ENCODE measurements at regions of chr15 and their contacts with region 1.

Region 1: GRCh38 chr15:73873889-73874511 is 636 bp downstream of the TBC1D21 start:
- DNase-seq: peak; percentile 29 to 67 (median 37)
- H3K4me3 ChIP-seq: no peak overlapping the region
- H3K4me3 Mint-ChIP-seq: no peak overlapping the region
- H3K27ac ChIP-seq: no peak overlapping the region
- H3K27ac Mint-ChIP-seq: no peak overlapping the region
- H3K4me1 ChIP-seq: no peaks in the 10 kb centered on the region
- H3K4me1 Mint-ChIP-seq: no peaks in the 10 kb centered on the region
- H3K27me3 ChIP-seq: peaks cover 7 to 8% of the 10 kb centered on the region in 2 donors
- H3K27me3 Mint-ChIP-seq: peaks cover 3 to 32% (median 15%) of the 10 kb centered on the region in 3 donors
- CTCF ChIP-seq: peak; percentile 77

Region 2: DNA sequence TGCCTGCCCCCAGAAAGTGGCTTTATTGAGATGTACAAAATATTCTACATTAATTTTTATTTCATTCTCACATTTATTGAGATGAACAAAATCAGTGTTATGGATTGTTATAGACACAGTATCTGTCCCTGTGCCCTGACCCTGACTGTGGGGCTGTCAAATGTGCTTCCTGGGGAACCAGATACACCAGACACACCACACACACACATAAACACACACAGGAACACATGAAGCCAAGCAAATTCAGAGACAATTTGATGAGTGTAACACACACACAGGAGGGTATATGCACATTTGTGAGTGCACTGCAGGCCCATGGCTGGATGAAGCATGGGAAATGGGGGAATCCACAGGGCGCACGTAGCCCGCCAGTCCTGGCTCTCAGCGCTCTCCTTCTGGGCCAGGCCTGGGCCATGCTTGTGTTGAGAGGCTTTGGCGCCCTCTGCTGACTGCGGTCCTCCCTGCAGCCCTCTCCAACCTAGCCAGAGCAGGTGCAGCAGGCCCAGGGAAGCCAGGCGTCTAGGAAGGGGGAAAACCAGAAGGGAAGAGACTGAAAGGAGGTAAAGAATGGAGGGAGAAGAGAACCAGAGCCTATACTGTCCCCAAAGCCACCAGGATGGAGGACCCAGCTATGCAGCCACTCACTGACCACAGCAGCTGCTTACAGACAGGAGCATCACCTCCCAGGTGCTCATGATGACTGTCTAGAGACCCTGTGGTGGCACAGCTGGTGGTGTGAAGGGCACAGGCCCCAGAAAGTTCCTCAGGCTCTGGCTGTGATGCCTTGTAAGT is 34.2 kb after region 1 on chr15:
- intact Hi-C with region 1: loop called in 1 of 2 experiments (anchors 2 kb)
- DNase-seq: peak; percentile 53 to 71 (median 69)
- H3K4me3 ChIP-seq: no peak overlapping the region
- H3K4me3 Mint-ChIP-seq: no peak overlapping the region
- H3K27ac ChIP-seq: no peak overlapping the region
- H3K27ac Mint-ChIP-seq: peak overlapping the region in 1 of 7 donors; percentile 8
- H3K4me1 ChIP-seq: peaks cover 0 to 11% of the 10 kb centered on the region in 2 donors
- H3K4me1 Mint-ChIP-seq: peaks cover 22% of the 10 kb centered on the region
- H3K27me3 ChIP-seq: no peaks in the 10 kb centered on the region
- H3K27me3 Mint-ChIP-seq: peaks cover 4 to 11% (median 5%) of the 10 kb centered on the region in 3 donors
- CTCF ChIP-seq: peak; percentile 94